Activated CD8-positive, alpha-beta T cell treated with anti-CD3 and anti-CD28 coated beads, Interleukin-2, amount 10 ng/mL, durations not matched to agents 7 days and 5 days (primary cell): ENCODE measurements at regions of chr17 and their contacts with region 1.

Region 1: DNA sequence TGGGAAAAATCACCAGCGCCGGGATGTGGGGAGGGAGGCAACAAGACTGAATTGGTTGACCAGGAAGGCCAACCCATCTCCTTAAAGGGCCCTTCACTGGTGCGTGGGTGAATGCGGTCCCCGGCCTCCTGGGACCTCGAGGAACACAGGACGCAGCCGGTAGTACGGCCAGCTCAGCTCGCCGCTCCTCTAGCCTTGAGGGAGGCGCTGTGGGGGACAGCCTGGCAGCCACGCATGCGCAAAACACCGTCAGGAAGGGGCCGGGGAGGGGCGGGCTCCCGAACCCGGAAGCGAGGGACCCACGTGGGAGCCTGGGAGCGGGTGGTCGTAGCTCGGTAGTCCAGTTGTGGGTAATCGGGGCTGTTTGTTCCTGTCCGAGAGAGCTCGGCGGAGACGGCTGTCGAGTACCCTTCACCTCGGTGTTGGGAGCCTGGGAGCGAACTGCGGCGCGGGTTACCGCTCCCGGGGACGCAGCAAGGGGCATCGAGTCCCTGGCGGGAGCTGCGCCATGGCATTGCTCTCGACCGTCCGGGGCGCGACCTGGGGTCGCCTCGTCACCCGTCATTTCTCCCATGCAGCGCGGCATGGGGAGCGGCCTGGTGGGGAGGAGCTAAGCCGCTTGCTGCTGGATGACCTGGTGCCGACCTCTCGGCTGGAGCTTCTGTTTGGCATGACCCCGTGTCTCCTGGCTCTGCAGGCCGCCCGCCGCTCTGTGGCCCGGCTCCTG is at the start of gene MRM1:
- DNase-seq: peak; percentile 93
- ATAC-seq: peak; percentile 90
- H3K4me3 Mint-ChIP-seq: peak within 1 kb of the TSS; percentile 88
- H3K27ac Mint-ChIP-seq: peak within 1 kb of the TSS; percentile 88
- H3K4me1 Mint-ChIP-seq: peaks cover 44% of the 10 kb centered on the region
- H3K27me3 Mint-ChIP-seq: no peaks in the 10 kb centered on the region
- total RNA-seq, gene MRM1: 10.7 to 13.1 TPM

Region 2: GRCh38 chr17:36614933-36615332 is 13.5 kb after region 1 on chr17:
- CTCF ChIA-PET with region 1: interaction called, 24 read pairs
- POLR2A ChIA-PET with region 1: interaction called, 7 read pairs
- DNase-seq: no peak
- ATAC-seq: no peak
- H3K4me3 Mint-ChIP-seq: no peak overlapping the region
- H3K27ac Mint-ChIP-seq: no peak overlapping the region
- H3K4me1 Mint-ChIP-seq: no peaks in the 10 kb centered on the region
- H3K27me3 Mint-ChIP-seq: no peaks in the 10 kb centered on the region

Region 3: DNA sequence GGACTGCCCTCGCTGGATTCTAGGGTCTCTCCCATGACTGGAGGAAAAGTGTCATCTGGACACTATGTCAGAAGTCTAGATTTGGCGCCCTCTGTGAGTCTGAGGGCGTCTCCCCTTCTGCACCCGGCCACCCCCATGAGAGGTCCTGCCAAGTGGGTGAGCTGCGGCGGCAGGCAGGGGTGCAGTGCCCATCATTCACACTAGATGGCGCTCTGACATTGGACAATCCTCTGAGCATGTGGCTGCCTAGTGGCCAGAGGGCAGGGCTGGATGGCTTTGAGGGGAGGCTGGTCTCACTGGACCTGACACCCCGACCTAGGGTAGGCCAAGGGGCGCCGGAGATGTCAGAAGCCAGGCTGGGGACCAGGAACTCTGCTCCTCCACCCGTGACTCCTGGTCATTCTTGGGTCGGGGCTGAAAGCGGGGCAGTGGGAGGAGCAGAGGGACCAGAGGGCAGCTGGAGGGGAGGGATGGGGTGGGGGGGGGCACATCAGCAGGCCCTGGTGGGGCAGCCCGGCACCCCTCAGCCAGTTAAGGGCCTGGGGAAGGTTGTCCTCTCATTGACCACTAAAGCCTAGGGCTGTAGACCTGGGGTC is 27.9 kb after region 1 on chr17:
- CTCF ChIA-PET with region 1: interaction called, 40 read pairs
- POLR2A ChIA-PET with region 1: interaction called, 4 read pairs
- DNase-seq: peak; percentile 83
- ATAC-seq: peak; percentile 83
- H3K4me3 Mint-ChIP-seq: no peak overlapping the region
- H3K27ac Mint-ChIP-seq: no peak overlapping the region
- H3K4me1 Mint-ChIP-seq: no peaks in the 10 kb centered on the region
- H3K27me3 Mint-ChIP-seq: peaks cover 14% of the 10 kb centered on the region

Region 4: GRCh38 chr17:36722121-36722902 is 120.8 kb after region 1 on chr17:
- CTCF ChIA-PET with region 1: interaction called, 15 read pairs
- POLR2A ChIA-PET with region 1: interaction called, 7 read pairs
- DNase-seq: peak; percentile 84
- ATAC-seq: peak; percentile 94
- H3K4me3 Mint-ChIP-seq: peak overlapping the region; percentile 73
- H3K27ac Mint-ChIP-seq: peak overlapping the region; percentile 95
- H3K4me1 Mint-ChIP-seq: peaks cover 61% of the 10 kb centered on the region
- H3K27me3 Mint-ChIP-seq: peaks cover 4% of the 10 kb centered on the region

Region 5: GRCh38 chr17:37239690-37240334 is 638.3 kb after region 1 on chr17:
- CTCF ChIA-PET with region 1: interaction called, 17 read pairs
- POLR2A ChIA-PET with region 1: no interaction called
- DNase-seq: peak; percentile 23
- ATAC-seq: no peak
- H3K4me3 Mint-ChIP-seq: no peak overlapping the region
- H3K27ac Mint-ChIP-seq: no peak overlapping the region
- H3K4me1 Mint-ChIP-seq: no peaks in the 10 kb centered on the region
- H3K27me3 Mint-ChIP-seq: no peaks in the 10 kb centered on the region